Mammary epithelial cell (primary cell): ENCODE measurements at regions of chr22 and their contacts with region 1.

Region 1: DNA sequence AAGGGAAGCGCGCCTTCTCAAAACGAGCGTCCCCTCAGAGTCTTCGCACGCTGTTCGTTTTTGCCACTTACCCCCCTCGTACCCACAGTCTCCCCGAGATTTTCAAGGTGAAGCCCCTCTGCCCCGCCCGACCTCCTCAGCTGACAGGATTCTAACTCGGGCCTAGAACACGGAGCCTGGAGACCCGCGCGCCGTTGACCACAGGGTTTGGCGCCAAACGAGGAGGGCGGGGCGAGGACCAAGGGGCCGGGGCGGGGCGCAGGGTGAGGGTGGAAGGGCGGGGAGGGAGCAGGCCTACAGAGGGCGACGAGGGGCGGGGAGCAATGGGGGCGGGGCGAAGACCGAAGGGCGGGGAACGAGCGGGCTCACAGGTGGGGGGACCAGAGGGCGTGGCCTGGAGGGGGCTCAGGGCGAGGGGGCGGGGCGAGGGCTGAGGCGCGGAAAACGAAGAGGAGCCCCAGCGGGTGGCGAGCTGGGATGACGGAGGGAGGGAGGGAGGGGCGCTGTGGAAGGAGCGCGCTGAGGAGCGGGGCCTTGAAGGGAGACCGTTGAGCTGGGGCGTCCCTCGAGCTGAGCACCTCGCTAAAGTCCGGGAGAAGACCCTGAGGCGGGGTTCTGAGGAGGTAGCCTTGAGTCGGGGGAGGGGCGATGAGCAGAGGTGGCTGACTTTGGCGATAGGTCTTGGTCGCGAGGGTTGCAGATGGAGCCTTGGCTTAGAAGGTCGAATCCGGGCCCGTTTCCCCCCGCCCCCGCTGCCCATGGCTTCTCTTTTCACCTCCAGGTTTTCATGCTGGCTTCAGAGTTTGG is at the start of gene DMC1:
- DNase-seq: peak; percentile 67
- H3K4me3 ChIP-seq: peak within 1 kb of the TSS; percentile 48 to 73 (median 65)
- H3K27ac ChIP-seq: peak within 1 kb of the TSS; percentile 24
- H3K4me1 ChIP-seq: peaks cover 21% of the 10 kb centered on the region
- H3K27me3 ChIP-seq: no peaks in the 10 kb centered on the region
- CTCF ChIP-seq: no peak
- total RNA-seq, gene DMC1: 0.50 to 1.3 TPM

Region 2: DNA sequence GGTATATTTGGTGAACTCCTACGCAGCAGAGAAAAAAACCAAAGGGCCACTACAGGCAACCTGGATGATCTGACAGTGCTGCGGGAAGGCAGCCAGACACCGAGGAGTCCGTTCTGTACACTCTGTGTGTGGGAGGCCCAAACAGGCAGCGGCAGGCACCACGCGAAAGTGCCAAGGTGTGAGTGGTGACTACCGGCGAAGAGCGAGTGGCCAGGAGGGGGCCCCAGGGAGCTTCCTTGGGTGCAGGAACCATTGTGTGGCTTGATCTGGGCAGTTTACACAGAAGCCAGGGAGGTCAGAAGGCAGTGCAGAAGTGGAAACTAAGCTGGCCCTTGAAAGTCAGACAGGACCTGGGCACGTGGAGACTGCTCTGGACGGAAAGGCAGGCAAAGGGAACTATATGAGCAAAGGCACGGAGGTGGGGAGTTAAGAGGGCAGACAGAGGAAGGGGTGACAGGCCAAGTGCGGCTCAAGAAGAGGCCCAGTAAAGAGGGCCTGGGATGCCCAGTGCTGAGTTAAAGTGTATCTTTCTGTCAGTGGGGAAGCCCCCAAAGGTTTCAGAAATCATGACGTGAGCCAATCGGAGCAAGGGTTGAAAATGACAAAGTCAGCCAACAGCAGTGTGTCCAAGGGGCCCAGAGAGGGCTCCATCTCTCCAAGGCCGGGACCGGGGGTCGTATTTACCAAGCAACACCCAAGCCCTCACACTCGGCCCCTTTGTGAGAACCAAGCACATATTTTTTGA is 308.0 kb before region 1 on chr22:
- CTCF ChIA-PET with region 1: no interaction called
- dilution Hi-C with region 1: no loop called
- in situ Hi-C with region 1: no loop called
- intact Hi-C with region 1: loop called (anchors 5 kb)
- DNase-seq: peak; percentile 81
- H3K4me3 ChIP-seq: no peak overlapping the region
- H3K27ac ChIP-seq: no peak overlapping the region
- H3K4me1 ChIP-seq: peaks cover 15% of the 10 kb centered on the region
- H3K27me3 ChIP-seq: no peaks in the 10 kb centered on the region
- CTCF ChIP-seq: peak; percentile 51 to 85

Region 3: DNA sequence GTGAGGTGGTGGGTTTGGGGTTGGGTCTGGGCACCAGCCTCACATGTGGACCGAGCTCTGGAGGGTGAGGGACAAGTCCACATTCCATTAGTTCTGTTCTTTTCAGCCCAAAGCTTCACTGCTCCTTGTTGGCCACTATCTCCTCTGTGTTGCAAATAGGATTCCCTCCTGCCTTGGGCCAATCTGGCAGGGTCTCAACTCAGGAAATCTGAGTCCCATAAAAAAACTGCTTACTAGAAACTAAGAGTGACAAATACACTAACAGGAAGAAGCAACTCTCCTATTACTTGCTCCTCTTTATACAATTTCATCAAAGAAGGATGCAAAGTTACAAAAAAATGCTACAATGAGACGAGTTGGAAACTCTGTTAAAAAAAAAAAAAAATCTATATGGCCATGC is 186.8 kb before region 1 on chr22:
- CTCF ChIA-PET with region 1: no interaction called
- dilution Hi-C with region 1: no loop called
- in situ Hi-C with region 1: no loop called
- intact Hi-C with region 1: no loop called
- DNase-seq: no peak
- H3K4me3 ChIP-seq: no peak overlapping the region
- H3K27ac ChIP-seq: no peak overlapping the region
- H3K4me1 ChIP-seq: no peaks in the 10 kb centered on the region
- H3K27me3 ChIP-seq: no peaks in the 10 kb centered on the region
- CTCF ChIP-seq: no peak

Region 4: DNA sequence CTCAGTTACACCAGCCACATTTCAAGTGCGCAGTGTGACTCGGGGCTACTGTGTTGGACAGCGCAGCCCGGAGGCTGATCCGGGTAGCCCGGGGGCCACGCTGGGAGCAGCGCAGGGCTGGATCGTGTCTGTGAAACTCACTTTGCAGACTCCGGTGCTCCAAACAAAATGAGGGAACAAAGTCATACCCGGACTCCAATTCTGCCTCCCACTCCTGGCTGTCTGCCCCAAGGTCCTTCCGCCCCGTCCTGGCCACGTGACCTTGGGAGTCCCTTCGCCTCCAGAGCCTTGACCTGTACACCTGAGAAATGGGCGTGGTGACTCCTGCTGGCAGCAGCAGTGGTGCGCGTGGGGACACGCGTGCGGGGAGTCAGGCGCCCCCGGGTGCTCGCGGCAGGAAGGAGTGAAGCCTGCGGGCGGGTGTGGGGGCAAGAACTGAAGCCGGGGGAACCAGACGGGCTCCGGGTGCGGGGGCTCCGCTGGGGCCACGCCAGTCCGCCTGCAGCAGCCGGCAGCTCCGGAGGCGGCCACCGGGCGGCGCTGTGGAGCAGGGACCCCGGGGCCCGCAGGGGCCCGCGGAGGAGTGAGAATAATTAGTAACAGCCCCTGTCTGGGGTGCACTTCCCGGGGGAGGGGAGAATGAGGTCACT is 157.6 kb before region 1 on chr22:
- CTCF ChIA-PET with region 1: no interaction called
- dilution Hi-C with region 1: no loop called
- in situ Hi-C with region 1: no loop called
- intact Hi-C with region 1: loop called (anchors 5 kb)
- DNase-seq: no peak
- H3K4me3 ChIP-seq: peak overlapping the region in 1 of 3 experiments; percentile 24
- H3K27ac ChIP-seq: no peak overlapping the region
- H3K4me1 ChIP-seq: peaks cover 8% of the 10 kb centered on the region
- H3K27me3 ChIP-seq: no peaks in the 10 kb centered on the region
- CTCF ChIP-seq: peak; percentile 40 to 72

Region 5: GRCh38 chr22:38506118-38506962 is 63.8 kb before region 1 on chr22 and contains the start of gene DDX17:
- CTCF ChIA-PET with region 1: no interaction called
- dilution Hi-C with region 1: no loop called
- in situ Hi-C with region 1: no loop called
- intact Hi-C with region 1: loop called (anchors 1 kb)
- DNase-seq: peak; percentile 92
- H3K4me3 ChIP-seq: peak within 1 kb of the TSS; percentile 83 to 96 (median 90)
- H3K27ac ChIP-seq: peak within 1 kb of the TSS; percentile 98
- H3K4me1 ChIP-seq: peaks cover 12% of the 10 kb centered on the region
- H3K27me3 ChIP-seq: no peaks in the 10 kb centered on the region
- CTCF ChIP-seq: no peak
- total RNA-seq, gene DDX17: 235 to 405 TPM

Region 6: GRCh38 chr22:38608992-38609750 is 39.0 kb after region 1 on chr22:
- CTCF ChIA-PET with region 1: no interaction called
- dilution Hi-C with region 1: loop called (anchors 5 kb)
- in situ Hi-C with region 1: no loop called
- intact Hi-C with region 1: no loop called
- DNase-seq: no peak
- H3K4me3 ChIP-seq: no peak overlapping the region
- H3K27ac ChIP-seq: no peak overlapping the region
- H3K4me1 ChIP-seq: peaks cover 7% of the 10 kb centered on the region
- H3K27me3 ChIP-seq: no peaks in the 10 kb centered on the region
- CTCF ChIP-seq: no peak

Region 7: GRCh38 chr22:38656256-38657044 is 86.3 kb after region 1 on chr22 and contains the starts of genes CBY1 and FAM227A:
- CTCF ChIA-PET with region 1: no interaction called
- dilution Hi-C with region 1: no loop called
- in situ Hi-C with region 1: no loop called
- intact Hi-C with region 1: no loop called
- DNase-seq: peak; percentile 87
- H3K4me3 ChIP-seq: peak within 1 kb of the TSS; percentile 61 to 91 (median 81)
- H3K27ac ChIP-seq: peak within 1 kb of the TSS; percentile 96
- H3K4me1 ChIP-seq: no peaks in the 10 kb centered on the region
- H3K27me3 ChIP-seq: no peaks in the 10 kb centered on the region
- CTCF ChIP-seq: no peak
- total RNA-seq, gene CBY1: 19.5 to 34.1 TPM
- total RNA-seq, gene FAM227A: 2.1 to 5.7 TPM